Lower leg skin (tissue), 4 donors: ENCODE measurements at regions of chr3 and their contacts with region 1.

Region 1: DNA sequence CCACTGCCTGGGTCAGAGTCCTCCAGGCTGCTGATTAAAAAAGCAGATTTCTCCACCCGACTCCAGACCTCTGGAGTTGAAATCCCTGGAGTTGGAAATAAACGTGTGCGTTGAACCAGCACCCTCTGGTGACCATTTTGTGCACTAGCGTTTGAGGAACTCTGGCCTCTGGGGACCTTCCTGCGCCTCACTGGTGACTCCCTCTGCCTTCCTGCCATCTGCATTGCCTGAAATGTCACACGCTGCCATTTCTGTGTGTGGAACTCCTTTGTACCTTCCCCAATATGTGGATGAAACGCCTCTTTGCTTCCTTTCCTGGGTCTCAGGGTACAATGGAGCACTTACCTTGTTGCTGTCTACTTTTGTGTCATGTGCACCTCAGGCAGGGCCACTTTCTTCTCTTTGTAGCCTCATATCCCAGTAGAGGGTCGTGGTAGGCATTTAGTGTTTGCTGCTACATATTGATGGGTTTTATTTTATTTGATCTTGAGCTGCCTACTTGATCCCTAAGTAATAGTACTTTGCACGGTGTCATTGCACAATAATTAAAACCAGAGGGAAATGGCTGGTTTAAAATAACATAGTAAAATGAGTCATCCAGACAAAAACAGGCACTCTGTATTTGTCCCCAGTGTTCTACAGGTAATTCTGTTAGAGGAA is 56.8 kb downstream of the GPR171 start:
- DNase-seq: peak; percentile 63 to 92
- H3K4me3 ChIP-seq: no peak overlapping the region
- CTCF ChIP-seq: peak in 1 of 3 donors; percentile 56
- POLR2A ChIP-seq: no peak

Region 2: GRCh38 chr3:150793609-150794008 is 352.6 kb before region 1 on chr3:
- intact Hi-C with region 1: loop called (anchors 5 kb)
- DNase-seq: no peak
- H3K4me3 ChIP-seq: no peak overlapping the region
- CTCF ChIP-seq: no peak
- POLR2A ChIP-seq: no peak

Region 3: DNA sequence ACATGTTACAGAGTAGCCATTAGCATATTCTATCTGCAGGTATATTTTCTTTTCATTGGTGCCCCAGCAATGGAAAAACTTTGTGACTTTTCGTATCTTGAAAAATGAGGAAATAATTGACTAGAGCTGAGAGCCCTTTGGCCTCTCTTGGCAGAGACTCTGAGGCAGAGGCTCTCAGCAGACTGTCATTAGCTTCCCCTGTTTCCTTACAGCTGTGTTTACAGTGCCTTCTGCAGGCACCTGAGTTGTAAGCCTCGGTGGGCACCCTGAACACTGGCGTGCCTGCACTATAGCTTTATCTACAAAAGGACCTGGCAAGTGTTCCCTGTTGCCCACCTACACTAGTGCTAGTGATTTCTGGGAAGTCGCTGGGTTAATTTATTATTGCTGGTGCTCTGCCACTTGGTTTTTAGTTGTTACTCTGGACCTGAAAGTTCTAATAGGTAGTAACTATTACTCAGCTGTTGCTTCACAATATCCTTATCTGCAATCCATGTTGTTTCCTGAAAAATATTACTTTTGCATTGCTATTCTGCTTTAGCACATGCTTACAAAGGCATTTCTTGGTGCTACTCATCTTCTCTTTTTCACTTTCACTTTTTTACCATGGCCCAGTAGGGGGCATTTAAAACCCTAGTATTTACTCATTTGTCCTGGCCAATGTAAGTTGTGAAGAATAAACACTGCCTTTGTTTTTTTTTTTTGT is 64.6 kb after region 1 on chr3:
- intact Hi-C with region 1: no loop called
- DNase-seq: no peak
- H3K4me3 ChIP-seq: no peak overlapping the region
- CTCF ChIP-seq: no peak
- POLR2A ChIP-seq: no peak